Posterior vena cava (tissue), 2 donors: ENCODE measurements at regions of chr5 and their contacts with region 1.

Region 1: GRCh38 chr5:62509806-62510205 is 68.8 kb upstream of the LRRC70 start:
- DNase-seq: no peak

Region 2: DNA sequence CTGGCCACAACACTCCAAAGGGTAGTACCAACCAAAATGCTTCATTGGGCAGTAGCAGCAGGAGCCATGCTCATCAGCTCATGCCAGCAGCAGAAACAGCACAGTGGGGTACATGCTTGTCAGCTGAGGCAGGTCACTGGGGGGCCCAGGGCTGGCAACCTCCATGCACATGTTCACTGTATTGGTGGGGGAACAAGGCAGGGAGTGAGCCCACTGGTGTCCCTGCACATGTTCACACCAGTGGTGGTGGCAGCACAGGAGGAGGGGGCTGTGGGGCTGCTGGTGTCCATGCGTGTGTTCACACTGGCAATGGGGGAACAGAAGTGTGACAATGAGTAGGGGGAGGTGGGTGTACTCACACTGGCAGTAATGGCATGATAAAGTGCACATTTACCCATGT is 458.1 kb before region 1 on chr5:
- intact Hi-C with region 1: loop called in 1 of 2 experiments (anchors 5 kb)
- DNase-seq: no peak